Activated CD8-positive, alpha-beta T cell treated with anti-CD3 and anti-CD28 coated beads for 36 hours (primary cell): ENCODE measurements at regions of chr19 and their contacts with region 1.

Region 1: GRCh38 chr19:17703824-17704463 is 15.3 kb upstream of the MAP1S start:
- DNase-seq: peak; percentile 85
- ATAC-seq: peak; percentile 99
- H3K4me3 Mint-ChIP-seq: no peak overlapping the region
- H3K27ac Mint-ChIP-seq: no peak overlapping the region
- H3K4me1 Mint-ChIP-seq: no peaks in the 10 kb centered on the region
- H3K27me3 Mint-ChIP-seq: peaks cover 2% of the 10 kb centered on the region
- CTCF ChIP-seq: peak; percentile 96

Region 2: DNA sequence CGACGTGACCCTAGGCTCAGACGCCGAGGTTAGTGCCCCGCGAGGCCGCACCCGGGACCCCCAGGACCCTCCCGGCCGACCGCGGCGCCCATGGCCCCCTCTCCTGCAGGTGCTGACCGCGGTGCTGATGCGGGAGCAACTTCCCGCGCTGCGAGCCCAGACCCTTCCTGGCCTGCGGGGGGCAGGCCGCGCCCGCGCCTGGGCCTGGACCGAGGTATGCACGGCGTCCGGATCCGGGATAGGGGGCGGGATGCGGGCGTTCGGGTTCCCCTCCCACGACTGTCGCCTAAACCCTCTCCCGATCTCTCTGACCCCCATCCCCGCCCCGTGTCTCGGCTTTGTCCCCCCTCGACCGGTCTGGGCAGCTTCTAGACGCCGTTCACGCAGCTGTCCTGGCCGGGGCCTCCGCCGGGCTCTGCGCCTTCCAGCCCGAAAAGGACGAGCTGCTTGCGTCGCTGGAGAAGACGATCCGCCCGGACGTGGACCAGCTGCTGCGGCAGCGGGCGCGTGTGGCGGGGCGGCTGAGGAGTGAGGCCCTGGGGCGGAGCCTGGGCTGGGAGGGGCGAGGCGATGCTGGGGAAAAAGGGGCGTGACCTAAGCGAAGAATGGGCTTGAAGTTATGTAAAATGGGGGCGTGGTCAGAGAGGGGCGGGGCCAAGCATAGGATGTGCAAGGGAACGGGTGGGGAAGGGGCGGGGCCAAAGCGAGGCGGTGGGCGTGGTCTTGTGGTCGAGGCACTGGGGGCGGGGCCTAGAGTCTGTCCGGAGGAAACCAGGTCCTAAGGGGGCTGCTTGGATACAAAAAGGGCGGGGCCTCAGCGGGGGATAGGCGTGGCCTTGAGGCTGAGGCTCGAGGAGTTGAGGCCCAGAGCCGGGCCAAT is 164.5 kb before region 1 on chr19:
- CTCF ChIA-PET with region 1: no interaction called
- POLR2A ChIA-PET with region 1: no interaction called
- intact Hi-C with region 1: no loop called
- DNase-seq: peak; percentile 100
- ATAC-seq: peak; percentile 97
- H3K4me3 Mint-ChIP-seq: peak overlapping the region; percentile 74
- H3K27ac Mint-ChIP-seq: peak overlapping the region; percentile 25
- H3K4me1 Mint-ChIP-seq: peaks cover 13% of the 10 kb centered on the region
- H3K27me3 Mint-ChIP-seq: peaks cover 4% of the 10 kb centered on the region
- CTCF ChIP-seq: no peak

Region 3: GRCh38 chr19:17688853-17689595 is 14.9 kb before region 1 on chr19:
- CTCF ChIA-PET with region 1: interaction called, 11 read pairs
- POLR2A ChIA-PET with region 1: no interaction called
- intact Hi-C with region 1: no loop called
- DNase-seq: no peak
- ATAC-seq: no peak
- H3K4me3 Mint-ChIP-seq: no peak overlapping the region
- H3K27ac Mint-ChIP-seq: no peak overlapping the region
- H3K4me1 Mint-ChIP-seq: peaks cover 5% of the 10 kb centered on the region
- H3K27me3 Mint-ChIP-seq: peaks cover 52% of the 10 kb centered on the region
- CTCF ChIP-seq: no peak

Region 4: GRCh38 chr19:17739121-17739875 is 35.4 kb after region 1 on chr19:
- CTCF ChIA-PET with region 1: interaction called, 13 read pairs
- POLR2A ChIA-PET with region 1: no interaction called
- intact Hi-C with region 1: no loop called
- DNase-seq: no peak
- ATAC-seq: no peak
- H3K4me3 Mint-ChIP-seq: no peak overlapping the region
- H3K27ac Mint-ChIP-seq: no peak overlapping the region
- H3K4me1 Mint-ChIP-seq: peaks cover 10% of the 10 kb centered on the region
- H3K27me3 Mint-ChIP-seq: no peaks in the 10 kb centered on the region
- CTCF ChIP-seq: no peak

Region 5: DNA sequence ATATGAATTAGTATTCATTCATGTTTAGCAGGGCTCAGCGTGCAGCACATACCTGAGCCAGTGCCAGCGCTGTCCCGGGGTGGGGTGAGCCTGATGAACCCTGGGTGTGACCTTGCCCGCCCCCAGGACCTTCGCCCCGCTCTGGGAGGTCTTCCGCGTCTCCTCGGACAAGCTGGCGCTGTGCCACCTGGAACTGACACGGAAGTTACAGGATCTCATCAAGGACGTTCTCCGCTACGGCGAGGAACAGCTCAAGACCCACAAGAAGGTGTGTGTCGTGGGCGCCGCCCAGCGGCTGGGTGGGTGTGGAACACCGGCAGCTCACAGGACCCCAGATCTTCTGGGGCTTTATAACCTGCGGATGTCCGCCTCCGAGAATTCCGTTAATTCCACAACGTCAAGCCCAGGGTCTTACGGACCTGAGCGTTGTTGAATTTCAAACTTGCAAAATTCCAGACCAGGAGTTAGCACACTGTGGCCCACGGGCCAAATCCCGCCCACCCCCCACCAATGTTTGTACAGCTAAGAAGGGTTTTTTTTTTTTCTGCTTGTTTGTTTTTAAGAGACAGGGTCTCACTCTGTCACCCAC is 62.7 kb after region 1 on chr19:
- CTCF ChIA-PET with region 1: interaction called, 36 read pairs
- POLR2A ChIA-PET with region 1: no interaction called
- intact Hi-C with region 1: no loop called
- DNase-seq: peak; percentile 66
- ATAC-seq: peak; percentile 58
- H3K4me3 Mint-ChIP-seq: no peak overlapping the region
- H3K27ac Mint-ChIP-seq: no peak overlapping the region
- H3K4me1 Mint-ChIP-seq: peaks cover 2% of the 10 kb centered on the region
- H3K27me3 Mint-ChIP-seq: no peaks in the 10 kb centered on the region
- CTCF ChIP-seq: peak; percentile 46

Region 6: GRCh38 chr19:17784201-17785008 is 80.5 kb after region 1 on chr19:
- CTCF ChIA-PET with region 1: interaction called, 12 read pairs
- POLR2A ChIA-PET with region 1: no interaction called
- intact Hi-C with region 1: loop called (anchors 5 kb)
- DNase-seq: peak; percentile 89
- ATAC-seq: peak; percentile 84
- H3K4me3 Mint-ChIP-seq: no peak overlapping the region
- H3K27ac Mint-ChIP-seq: no peak overlapping the region
- H3K4me1 Mint-ChIP-seq: peaks cover 3% of the 10 kb centered on the region
- H3K27me3 Mint-ChIP-seq: no peaks in the 10 kb centered on the region
- CTCF ChIP-seq: peak; percentile 91

Region 7: GRCh38 chr19:17893766-17894165 is 189.8 kb after region 1 on chr19:
- CTCF ChIA-PET with region 1: no interaction called
- POLR2A ChIA-PET with region 1: no interaction called
- intact Hi-C with region 1: no loop called
- DNase-seq: no peak
- ATAC-seq: no peak
- H3K4me3 Mint-ChIP-seq: no peak overlapping the region
- H3K27ac Mint-ChIP-seq: no peak overlapping the region
- H3K4me1 Mint-ChIP-seq: no peaks in the 10 kb centered on the region
- H3K27me3 Mint-ChIP-seq: peaks cover under 1% of the 10 kb centered on the region
- CTCF ChIP-seq: no peak